PC-9 (cell line): ENCODE measurements at regions of chr21 and their contacts with region 1.

Region 1: GRCh38 chr21:35377505-35378090 is 328.5 kb upstream of the RUNX1 start:
- DNase-seq: no peak
- H3K4me3 ChIP-seq: no peak overlapping the region
- H3K27ac ChIP-seq: no peak overlapping the region
- H3K4me1 ChIP-seq: no peaks in the 10 kb centered on the region
- H3K27me3 ChIP-seq: no peaks in the 10 kb centered on the region
- CTCF ChIP-seq: no peak

Region 2: GRCh38 chr21:35256467-35256988 is 121.1 kb before region 1 on chr21:
- CTCF ChIA-PET with region 1: no interaction called
- POLR2A ChIA-PET with region 1: no interaction called
- intact Hi-C with region 1: no loop called
- DNase-seq: peak; percentile 86 to 98
- H3K4me3 ChIP-seq: peak overlapping the region; percentile 42; the same call in 1 of the 2 replicates
- H3K27ac ChIP-seq: peak overlapping the region; percentile 99
- H3K4me1 ChIP-seq: peaks cover 37% of the 10 kb centered on the region
- H3K27me3 ChIP-seq: no peaks in the 10 kb centered on the region
- CTCF ChIP-seq: no peak

Region 3: DNA sequence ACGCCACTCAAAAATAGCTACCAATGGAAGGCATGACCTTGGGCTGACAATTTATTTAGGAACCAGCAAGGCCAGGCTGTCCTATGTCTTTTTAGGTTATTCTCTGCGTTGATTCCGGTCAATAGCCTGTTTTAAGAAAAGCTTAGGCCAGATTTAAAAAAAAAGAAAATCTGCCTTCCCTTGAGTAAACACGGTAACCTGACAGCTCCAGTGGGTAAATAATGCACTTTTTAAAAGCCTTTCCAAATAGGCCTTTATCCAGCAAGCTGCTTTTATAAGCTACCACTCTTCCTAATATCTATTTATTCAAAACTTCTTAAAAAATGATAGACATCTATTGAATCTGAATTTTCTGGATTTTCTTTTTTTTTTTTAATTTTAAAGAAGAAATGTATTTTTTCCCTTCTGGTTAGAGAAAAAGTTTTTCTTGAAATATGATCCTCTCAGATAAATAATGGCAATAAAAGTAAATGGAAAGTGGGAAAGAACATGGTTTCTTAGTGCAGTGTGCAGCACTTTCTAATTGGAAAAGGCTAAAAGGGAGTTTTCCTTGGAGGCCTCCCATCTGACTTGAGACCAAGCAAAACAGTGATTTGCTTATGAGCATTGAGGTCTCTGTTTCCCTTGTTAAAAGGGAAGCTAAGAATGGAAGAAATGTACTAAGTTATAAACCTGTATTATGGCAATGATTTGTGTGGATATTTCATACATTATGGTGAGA is 47.5 kb before region 1 on chr21:
- CTCF ChIA-PET with region 1: no interaction called
- POLR2A ChIA-PET with region 1: interaction called, 13 read pairs
- intact Hi-C with region 1: no loop called
- DNase-seq: no peak
- H3K4me3 ChIP-seq: no peak overlapping the region
- H3K27ac ChIP-seq: no peak overlapping the region
- H3K4me1 ChIP-seq: no peaks in the 10 kb centered on the region
- H3K27me3 ChIP-seq: no peaks in the 10 kb centered on the region
- CTCF ChIP-seq: no peak

Region 4: DNA sequence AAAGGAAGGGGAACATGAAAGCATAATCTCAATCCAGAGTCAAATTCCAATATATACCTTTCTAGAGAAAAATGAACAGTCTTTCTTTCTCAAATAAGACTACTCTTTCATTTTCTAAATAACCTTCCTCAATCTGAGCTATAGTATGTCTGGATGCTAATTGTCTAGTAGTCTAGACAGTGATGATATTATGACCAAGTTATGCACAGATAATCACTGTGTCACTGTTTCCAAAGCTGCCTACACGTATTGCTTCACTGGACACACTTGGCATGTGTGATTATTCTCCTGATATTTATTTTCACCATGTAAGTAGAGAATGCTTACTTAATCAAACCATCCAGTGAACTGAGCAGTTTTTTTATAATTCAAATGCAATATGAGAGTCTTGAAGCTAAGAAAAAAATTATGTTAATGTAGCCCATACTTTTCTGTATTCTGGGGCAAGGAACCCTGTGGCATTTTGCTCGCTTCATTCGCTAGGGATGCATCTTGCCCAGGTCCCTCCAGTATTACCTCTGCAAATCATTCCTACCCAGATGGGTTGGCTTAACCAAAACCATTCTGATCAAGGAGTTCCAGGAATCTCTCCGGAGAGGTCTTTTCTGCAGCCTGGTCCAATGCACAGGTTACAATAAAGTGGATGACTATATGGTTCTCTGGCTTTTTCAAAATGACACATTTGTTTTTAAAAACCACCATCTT is 25.4 kb before region 1 on chr21:
- CTCF ChIA-PET with region 1: no interaction called
- POLR2A ChIA-PET with region 1: no interaction called
- intact Hi-C with region 1: no loop called
- DNase-seq: no peak
- H3K4me3 ChIP-seq: no peak overlapping the region
- H3K27ac ChIP-seq: no peak overlapping the region
- H3K4me1 ChIP-seq: peaks cover 6% of the 10 kb centered on the region
- H3K27me3 ChIP-seq: no peaks in the 10 kb centered on the region
- CTCF ChIP-seq: no peak